WTC11 (cell line): ENCODE measurements at regions of chr20 and their contacts with region 1.

Region 1: DNA sequence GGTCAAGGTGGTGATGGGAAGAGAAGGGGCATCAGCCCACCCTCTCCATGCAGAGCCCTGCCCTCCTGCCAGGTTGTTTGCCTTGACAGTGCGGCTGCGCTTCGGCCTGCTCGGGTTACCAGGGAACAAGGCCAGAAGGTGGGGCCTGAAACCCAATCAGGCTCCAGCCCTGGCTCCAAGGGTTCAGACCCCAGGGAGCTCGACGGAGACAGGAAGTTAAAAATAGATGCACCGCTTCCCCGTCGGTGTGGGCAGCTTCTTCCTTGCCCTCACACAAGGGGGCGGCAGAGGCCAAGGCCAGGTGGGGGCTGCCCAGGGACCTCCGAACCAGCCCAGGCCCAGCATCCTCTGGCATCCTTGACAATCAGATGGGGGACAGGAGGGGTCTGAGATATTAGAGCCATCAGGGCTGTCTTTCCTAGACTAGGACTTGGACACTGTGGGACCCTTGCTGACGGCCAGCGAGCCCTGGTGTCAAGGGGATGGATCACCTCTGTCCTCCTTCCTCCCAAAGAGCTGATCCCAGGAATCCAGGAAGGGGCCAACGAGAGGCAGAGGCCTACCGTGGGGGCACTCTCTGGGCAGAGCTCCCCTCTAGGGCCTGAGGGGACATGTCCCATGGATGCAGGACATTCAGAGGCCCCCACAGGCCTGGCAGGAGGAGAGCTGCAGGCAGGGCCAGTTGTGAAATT is 65.2 kb downstream of the RIPOR3 start:
- DNase-seq: peak; percentile 91
- ATAC-seq: peak; percentile 95
- H3K4me3 Mint-ChIP-seq: no peak overlapping the region
- H3K27ac Mint-ChIP-seq: peak overlapping the region; percentile 53; the same call in 1 of the 2 replicates
- H3K4me1 Mint-ChIP-seq: peaks cover 18% of the 10 kb centered on the region
- H3K27me3 Mint-ChIP-seq: no peaks in the 10 kb centered on the region
- CTCF ChIP-seq: peak; percentile 67

Region 2: GRCh38 chr20:50498081-50498776 is 127.9 kb before region 1 on chr20:
- CTCF ChIA-PET with region 1: no interaction called
- POLR2A ChIA-PET with region 1: no interaction called
- DNase-seq: no peak
- ATAC-seq: no peak
- H3K4me3 Mint-ChIP-seq: no peak overlapping the region
- H3K27ac Mint-ChIP-seq: no peak overlapping the region
- H3K4me1 Mint-ChIP-seq: no peaks in the 10 kb centered on the region
- H3K27me3 Mint-ChIP-seq: peaks cover 3% of the 10 kb centered on the region
- CTCF ChIP-seq: no peak

Region 3: DNA sequence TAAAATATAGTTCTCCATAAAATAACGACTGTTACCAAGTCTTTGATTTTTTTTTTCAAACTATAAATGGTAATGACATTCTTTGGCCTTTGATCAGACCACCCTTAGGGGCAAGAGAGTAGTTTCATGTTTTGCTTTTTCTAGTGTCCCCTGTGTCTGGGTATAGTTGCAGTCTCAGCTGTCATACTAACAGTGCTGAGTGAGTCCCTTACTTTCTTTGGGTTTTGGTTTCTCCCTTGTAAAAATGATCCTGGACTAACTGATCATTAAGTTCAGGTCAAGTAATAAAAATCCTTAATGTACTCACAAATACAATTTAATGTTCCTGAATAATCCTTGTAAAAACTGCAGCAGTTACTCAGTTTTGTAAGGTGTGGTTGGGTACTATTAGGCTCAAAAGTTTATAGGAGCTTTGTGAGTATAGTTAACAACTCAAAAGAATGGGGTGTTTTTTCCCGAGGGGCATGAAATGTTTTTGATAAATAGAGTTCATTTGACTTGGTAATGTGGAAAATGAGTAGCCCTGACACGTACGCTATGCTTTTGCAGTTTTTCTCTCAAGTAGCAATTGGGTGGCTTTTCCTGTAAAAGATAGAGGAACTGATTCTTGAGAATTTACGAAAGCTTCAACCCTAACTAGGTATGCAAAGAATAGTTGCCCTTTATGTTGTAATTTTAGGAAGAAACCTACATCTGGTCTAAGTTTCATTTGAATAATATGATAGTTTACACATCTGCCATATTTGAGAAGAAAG is 109.8 kb before region 1 on chr20:
- CTCF ChIA-PET with region 1: no interaction called
- POLR2A ChIA-PET with region 1: no interaction called
- DNase-seq: no peak
- ATAC-seq: no peak
- H3K4me3 Mint-ChIP-seq: no peak overlapping the region
- H3K27ac Mint-ChIP-seq: no peak overlapping the region
- H3K4me1 Mint-ChIP-seq: peaks cover 20% of the 10 kb centered on the region
- H3K27me3 Mint-ChIP-seq: no peaks in the 10 kb centered on the region
- CTCF ChIP-seq: no peak

Region 4: DNA sequence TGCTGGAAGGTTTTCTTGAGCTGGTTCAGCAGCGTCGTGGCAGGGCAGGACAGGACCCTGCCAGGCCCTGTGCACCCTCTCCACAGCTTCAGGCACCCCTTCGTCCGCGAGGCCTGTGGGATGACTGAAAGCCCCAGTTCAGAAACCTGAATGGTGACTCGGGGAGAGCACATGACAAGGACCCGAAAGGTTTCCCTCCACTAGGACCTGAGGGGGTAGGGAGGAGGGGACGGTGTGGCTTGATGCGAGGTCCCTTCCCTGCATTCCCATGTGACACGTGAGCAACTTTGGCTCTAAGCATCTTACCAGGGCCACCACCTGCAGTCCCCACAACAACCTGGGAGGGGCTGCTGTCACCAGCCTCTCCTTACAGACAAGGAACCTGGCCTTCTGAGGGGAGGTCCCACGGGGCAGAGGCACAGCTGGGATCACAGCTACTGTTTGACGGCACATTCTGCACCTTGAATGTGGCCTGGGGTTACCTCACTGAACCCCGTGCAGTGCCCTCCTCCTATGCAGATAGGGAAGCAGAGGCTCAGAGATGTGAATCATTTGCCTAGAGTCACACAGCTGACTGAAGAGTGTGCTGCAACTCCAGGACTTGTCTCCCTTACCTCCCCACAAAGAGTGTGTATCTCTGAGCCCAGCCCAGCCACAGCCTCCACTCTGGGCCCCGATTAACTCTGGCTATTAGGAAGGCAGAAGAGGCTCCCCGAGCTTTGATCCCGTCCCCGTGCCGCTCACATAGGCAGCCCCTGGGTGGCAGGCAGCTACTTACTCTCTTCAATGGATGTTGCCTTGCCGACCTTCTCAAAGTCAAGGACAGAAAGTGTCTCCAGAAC is 31.3 kb before region 1 on chr20:
- CTCF ChIA-PET with region 1: interaction called, 26 read pairs
- POLR2A ChIA-PET with region 1: no interaction called
- DNase-seq: peak; percentile 23
- ATAC-seq: peak; percentile 61
- H3K4me3 Mint-ChIP-seq: no peak overlapping the region
- H3K27ac Mint-ChIP-seq: no peak overlapping the region
- H3K4me1 Mint-ChIP-seq: peaks cover 11% of the 10 kb centered on the region
- H3K27me3 Mint-ChIP-seq: no peaks in the 10 kb centered on the region
- CTCF ChIP-seq: no peak

Region 5: DNA sequence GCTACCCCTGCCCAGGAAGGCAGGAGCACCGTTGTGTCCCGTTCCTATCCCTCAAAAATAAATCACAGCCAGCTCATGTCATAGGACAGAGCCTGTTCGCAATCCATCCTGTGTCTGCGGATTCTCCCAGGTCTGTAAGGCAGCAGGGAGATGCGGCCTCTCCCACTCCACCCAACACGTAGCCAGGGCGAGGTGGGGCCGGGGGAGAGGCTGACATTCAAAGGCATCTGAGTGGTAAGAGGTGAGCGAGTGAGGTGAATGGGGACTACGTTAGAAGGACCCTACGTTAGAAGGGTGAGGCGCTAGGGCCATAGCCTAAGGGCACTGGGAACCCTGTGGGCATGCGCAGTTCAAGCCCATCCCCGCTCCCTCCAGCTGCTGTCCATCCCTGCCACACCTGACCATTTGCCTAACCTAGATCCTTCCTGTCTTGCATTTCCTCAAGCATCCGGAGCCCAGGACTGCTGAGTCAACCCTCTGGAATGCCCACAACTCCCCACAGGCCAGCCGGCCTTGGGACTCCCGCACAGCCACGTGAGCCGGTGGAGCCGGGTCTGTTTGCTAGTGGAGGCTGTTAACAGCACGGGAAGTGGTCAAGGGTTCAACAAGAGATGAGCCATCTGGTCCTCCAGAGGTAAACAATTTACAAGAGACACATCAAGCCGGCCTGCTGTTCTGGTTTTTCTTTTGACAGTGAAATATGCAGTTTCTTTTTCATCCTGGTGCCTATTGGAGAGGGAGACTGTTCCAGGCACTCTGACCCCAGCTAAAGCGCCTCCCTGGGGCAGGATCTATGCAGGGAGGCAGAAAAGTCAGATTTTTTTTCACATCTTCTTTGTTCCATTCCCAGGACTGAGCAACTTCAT is 19.4 kb after region 1 on chr20:
- CTCF ChIA-PET with region 1: interaction called, 26 read pairs
- POLR2A ChIA-PET with region 1: interaction called, 3 read pairs
- DNase-seq: peak; percentile 77
- ATAC-seq: peak; percentile 78
- H3K4me3 Mint-ChIP-seq: no peak overlapping the region
- H3K27ac Mint-ChIP-seq: peak overlapping the region; percentile 97
- H3K4me1 Mint-ChIP-seq: peaks cover 32% of the 10 kb centered on the region
- H3K27me3 Mint-ChIP-seq: no peaks in the 10 kb centered on the region
- CTCF ChIP-seq: no peak

Region 6: GRCh38 chr20:50668326-50668725 is 42.2 kb after region 1 on chr20:
- CTCF ChIA-PET with region 1: interaction called, 21 read pairs
- POLR2A ChIA-PET with region 1: no interaction called
- DNase-seq: no peak
- ATAC-seq: no peak
- H3K4me3 Mint-ChIP-seq: no peak overlapping the region
- H3K27ac Mint-ChIP-seq: 0 out of 2 replicates have a peak overlapping the region, but pooled peaks have one; percentile 11
- H3K4me1 Mint-ChIP-seq: peaks cover 24% of the 10 kb centered on the region
- H3K27me3 Mint-ChIP-seq: no peaks in the 10 kb centered on the region; the same call in 1 of the 2 replicates
- CTCF ChIP-seq: no peak

Region 7: DNA sequence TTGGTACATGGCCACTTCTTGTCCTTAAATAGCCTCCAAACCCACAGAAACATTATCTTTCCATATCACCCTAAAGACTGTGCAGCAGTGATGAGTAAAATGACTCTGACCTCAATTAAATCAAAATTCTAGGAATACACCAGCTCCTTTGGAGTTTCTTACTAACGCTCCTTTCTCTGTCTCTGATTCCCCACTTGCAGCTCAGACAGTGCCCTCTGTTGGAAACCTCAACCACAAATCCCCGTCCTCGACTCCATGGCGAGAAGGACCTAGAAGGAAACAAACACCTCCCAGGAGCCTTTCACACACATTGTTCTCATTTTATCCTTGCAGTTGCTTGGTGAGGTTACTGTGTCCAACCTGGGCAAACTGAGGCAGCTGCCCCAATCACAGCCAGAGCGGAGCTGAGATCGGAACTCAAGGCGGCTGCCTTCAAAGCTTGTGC is 87.5 kb after region 1 on chr20:
- CTCF ChIA-PET with region 1: interaction called, 64 read pairs
- POLR2A ChIA-PET with region 1: interaction called, 5 read pairs
- DNase-seq: peak; percentile 35
- ATAC-seq: peak; percentile 73
- H3K4me3 Mint-ChIP-seq: no peak overlapping the region
- H3K27ac Mint-ChIP-seq: peak overlapping the region; percentile 55; the same call in 1 of the 2 replicates
- H3K4me1 Mint-ChIP-seq: peaks cover 37% of the 10 kb centered on the region
- H3K27me3 Mint-ChIP-seq: no peaks in the 10 kb centered on the region; the same call in none of the 2 replicates
- CTCF ChIP-seq: no peak

Region 8: DNA sequence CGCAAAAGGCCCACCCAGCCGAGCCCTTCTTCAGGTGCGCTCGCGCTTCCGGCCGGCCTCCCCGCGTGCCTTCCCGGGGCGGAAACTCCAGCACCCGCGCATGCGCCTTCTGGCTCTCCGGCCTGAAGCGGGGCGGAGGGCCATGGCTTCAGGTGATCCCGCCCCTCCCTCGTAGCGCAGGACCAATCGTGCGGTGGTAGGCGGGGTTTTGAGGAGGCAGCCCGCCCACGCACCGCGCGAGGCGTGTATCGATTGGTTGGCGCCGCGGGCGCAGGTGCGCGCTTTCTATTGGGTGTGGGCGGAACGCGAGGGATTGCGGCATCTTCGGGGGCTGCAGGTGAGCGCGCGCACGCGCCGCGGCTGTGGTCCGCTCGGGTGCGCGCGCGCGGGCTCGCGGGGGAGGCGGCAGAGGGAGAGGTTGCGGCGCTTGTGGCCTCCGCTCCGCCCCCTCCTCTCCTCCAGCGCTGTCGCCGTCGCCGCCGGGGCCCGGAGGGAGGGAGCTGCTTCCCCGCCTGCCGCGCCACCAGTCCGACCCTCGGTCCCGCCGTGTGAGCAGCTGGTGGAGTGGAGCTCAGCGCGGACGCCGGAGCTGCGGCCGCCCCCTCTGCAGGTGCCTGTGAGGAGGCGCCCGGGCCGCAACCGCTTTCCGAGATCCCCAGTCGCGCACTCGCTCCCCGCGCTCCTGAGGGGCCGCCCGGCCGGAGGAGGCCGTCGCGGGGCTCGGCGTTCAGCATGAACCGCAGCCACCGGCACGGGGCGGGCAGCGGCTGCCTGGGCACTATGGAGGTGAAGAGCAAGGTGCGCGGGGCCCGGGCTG is 105.1 kb after region 1 on chr20 and contains the start of gene PARD6B:
- CTCF ChIA-PET with region 1: interaction called, 26 read pairs
- POLR2A ChIA-PET with region 1: no interaction called
- DNase-seq: peak; percentile 99
- ATAC-seq: peak; percentile 95
- H3K4me3 Mint-ChIP-seq: peak within 1 kb of the TSS; percentile 79
- H3K27ac Mint-ChIP-seq: peak within 1 kb of the TSS; percentile 95
- H3K4me1 Mint-ChIP-seq: peaks cover 40% of the 10 kb centered on the region
- H3K27me3 Mint-ChIP-seq: no peaks in the 10 kb centered on the region
- CTCF ChIP-seq: no peak
- total RNA-seq, gene PARD6B: 29.6 to 38.0 TPM (median 37.5 TPM) in 3 replicates

Region 9: DNA sequence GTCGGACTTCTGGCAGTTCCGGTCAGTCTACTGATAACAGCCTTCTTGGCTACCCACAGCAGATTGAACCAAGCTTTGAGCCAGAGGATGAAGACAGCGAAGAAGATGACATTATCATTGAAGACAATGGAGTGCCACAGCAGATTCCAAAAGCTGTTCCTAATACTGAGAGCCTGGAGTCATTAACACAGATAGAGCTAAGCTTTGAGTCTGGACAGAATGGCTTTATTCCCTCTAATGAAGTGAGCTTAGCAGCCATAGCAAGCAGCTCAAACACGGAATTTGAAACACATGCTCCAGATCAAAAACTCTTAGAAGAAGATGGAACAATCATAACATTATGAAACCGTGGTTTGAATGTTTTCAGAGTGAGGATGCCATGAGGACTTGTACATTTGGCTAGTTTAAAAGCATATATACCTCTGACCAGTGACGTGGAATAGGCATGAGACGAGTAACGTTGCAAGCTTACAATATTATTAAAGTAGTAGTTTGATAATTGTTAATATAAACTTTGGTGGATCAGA is 124.1 kb after region 1 on chr20:
- CTCF ChIA-PET with region 1: interaction called, 76 read pairs
- POLR2A ChIA-PET with region 1: interaction called, 3 read pairs
- DNase-seq: no peak
- ATAC-seq: no peak
- H3K4me3 Mint-ChIP-seq: no peak overlapping the region
- H3K27ac Mint-ChIP-seq: no peak overlapping the region
- H3K4me1 Mint-ChIP-seq: peaks cover 22% of the 10 kb centered on the region
- H3K27me3 Mint-ChIP-seq: no peaks in the 10 kb centered on the region
- CTCF ChIP-seq: no peak

Region 10: DNA sequence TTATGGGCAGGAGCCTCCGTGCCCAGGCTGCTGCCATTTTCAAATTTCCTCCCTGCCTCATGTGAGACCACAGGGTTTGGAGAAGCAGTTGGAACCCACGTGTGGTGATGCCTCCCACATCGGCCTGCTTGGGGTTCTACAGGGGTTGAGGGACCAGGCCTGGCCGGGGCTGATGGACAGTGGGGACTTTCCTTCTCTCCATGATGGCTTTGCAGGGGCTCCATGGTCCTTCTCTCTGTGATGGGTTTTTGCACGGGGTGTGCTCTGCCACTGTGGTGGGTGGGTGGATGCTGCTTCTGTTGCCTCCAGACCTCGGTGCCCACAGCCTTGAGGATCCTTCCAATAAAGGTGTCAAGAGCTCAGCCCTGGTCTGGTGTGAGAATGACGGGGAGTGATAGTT is 250.7 kb after region 1 on chr20:
- CTCF ChIA-PET with region 1: no interaction called
- POLR2A ChIA-PET with region 1: no interaction called
- DNase-seq: no peak
- ATAC-seq: no peak
- H3K4me3 Mint-ChIP-seq: no peak overlapping the region
- H3K27ac Mint-ChIP-seq: 0 out of 2 replicates have a peak overlapping the region, but pooled peaks have one; percentile 57
- H3K4me1 Mint-ChIP-seq: peaks cover 21% of the 10 kb centered on the region
- H3K27me3 Mint-ChIP-seq: no peaks in the 10 kb centered on the region
- CTCF ChIP-seq: no peak

Region 11: GRCh38 chr20:51091406-51092195 is 465.5 kb after region 1 on chr20:
- CTCF ChIA-PET with region 1: no interaction called
- POLR2A ChIA-PET with region 1: no interaction called
- DNase-seq: no peak
- ATAC-seq: peak; percentile 63
- H3K4me3 Mint-ChIP-seq: peak overlapping the region; percentile 41
- H3K27ac Mint-ChIP-seq: peak overlapping the region; percentile 48
- H3K4me1 Mint-ChIP-seq: peaks cover 39% of the 10 kb centered on the region
- H3K27me3 Mint-ChIP-seq: no peaks in the 10 kb centered on the region
- CTCF ChIP-seq: no peak